ENCODE measurements at regions of chr9 and their contacts with region 1.

Region 1: GRCh38 chr9:36873247-36873875 is 160.7 kb downstream of the PAX5 start:
- DNase-seq: peak; percentile 55 to 72 (median 64)
- ATAC-seq: peak; percentile 92
- H3K4me3 ChIP-seq: no peak overlapping the region
- H3K27ac ChIP-seq: no peak overlapping the region
- H3K4me1 ChIP-seq: no peaks in the 10 kb centered on the region
- H3K27me3 ChIP-seq: peaks cover 0 to 45% of the 10 kb centered on the region in 2 experiments; a peak in 2 of 5 replicates
- CTCF ChIP-seq: peak; percentile 69 to 80 (median 74)
- EP300 ChIP-seq: no peak
- POLR2A ChIP-seq: no peak
- RAD21 ChIP-seq: peak; percentile 46 to 84

Region 2: GRCh38 chr9:36946653-36947052 is 73.3 kb after region 1 on chr9:
- CTCF ChIA-PET with region 1: no interaction called
- POLR2A ChIA-PET with region 1: no interaction called
- in situ Hi-C with region 1: no loop called
- intact Hi-C with region 1: no loop called
- DNase-seq: no peak
- ATAC-seq: no peak
- H3K4me3 ChIP-seq: no peak overlapping the region
- H3K27ac ChIP-seq: no peak overlapping the region
- H3K4me1 ChIP-seq: no peaks in the 10 kb centered on the region
- H3K27me3 ChIP-seq: peaks cover 3 to 14% of the 10 kb centered on the region in 2 experiments; a peak in 3 of 5 replicates
- CTCF ChIP-seq: no peak
- EP300 ChIP-seq: no peak
- POLR2A ChIP-seq: no peak
- RAD21 ChIP-seq: no peak

Region 3: DNA sequence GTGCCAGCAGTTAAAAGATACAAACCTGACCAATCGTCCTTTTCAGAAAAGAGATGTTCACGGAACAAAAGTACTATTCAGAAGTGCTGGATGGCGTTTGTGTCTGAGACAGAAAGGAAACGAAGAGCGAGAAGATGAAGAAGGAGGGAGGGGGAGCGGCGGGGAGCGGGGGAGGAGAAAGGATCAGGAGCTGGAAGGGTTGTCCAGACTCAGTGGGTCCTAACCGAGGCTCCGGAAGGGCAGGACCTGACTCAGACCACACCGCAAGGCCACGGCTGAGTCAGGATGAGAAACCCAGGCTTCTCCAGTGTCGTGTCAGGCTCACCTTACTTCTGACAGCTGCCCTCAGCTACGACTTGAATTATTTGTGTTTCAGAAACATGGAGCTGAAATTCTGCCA is 114.5 kb after region 1 on chr9:
- CTCF ChIA-PET with region 1: interaction called, 7 read pairs
- POLR2A ChIA-PET with region 1: no interaction called
- in situ Hi-C with region 1: loop called (anchors 5 kb)
- intact Hi-C with region 1: loop called (anchors 1 kb)
- DNase-seq: no peak
- ATAC-seq: no peak
- H3K4me3 ChIP-seq: no peak overlapping the region
- H3K27ac ChIP-seq: no peak overlapping the region
- H3K4me1 ChIP-seq: peaks cover 0 to 4% of the 10 kb centered on the region in 2 experiments; a peak in 1 of 5 replicates
- H3K27me3 ChIP-seq: peaks cover 6 to 27% of the 10 kb centered on the region in 2 experiments; a peak in 3 of 5 replicates
- CTCF ChIP-seq: no peak
- EP300 ChIP-seq: no peak
- POLR2A ChIP-seq: no peak
- RAD21 ChIP-seq: no peak